ENCODE measurements at regions of chr12 and their contacts with region 1.

Region 1: DNA sequence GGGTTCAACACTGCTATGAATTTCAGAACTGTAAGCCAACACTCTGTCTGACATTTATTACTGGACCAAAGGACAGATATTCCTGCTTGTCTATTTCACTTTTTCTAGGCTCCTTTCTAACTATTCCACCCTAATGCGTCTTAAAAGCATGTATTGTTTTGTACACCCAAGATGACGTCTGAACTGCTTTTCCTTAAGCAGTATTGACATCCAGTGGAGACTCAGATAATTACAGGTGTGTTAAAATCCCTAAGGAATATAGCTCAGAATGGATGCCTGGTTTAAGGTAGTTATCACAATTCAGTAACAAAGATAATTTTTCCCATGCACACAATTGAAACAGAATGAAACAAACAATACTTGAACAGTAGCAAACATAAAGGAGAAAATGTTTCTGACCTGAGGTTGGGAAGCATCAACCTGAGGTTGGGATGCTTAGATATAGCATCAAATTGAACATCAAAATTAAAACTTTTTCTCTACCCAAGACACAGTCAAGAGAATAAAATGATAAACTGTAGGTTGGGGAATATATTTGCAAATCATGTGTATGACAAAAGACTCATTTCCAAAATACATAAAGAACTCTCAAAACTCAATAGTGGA is 93.7 kb upstream of the PTPRR start:
- DNase-seq: no peak
- H3K4me3 ChIP-seq: no peak overlapping the region
- H3K27ac ChIP-seq: no peak overlapping the region
- H3K4me1 ChIP-seq: peaks cover 0 to 15% (median 1%) of the 10 kb centered on the region in 4 donors
- H3K27me3 ChIP-seq: no peaks in the 10 kb centered on the region
- CTCF ChIP-seq: peak; percentile 63 to 86

Region 2: DNA sequence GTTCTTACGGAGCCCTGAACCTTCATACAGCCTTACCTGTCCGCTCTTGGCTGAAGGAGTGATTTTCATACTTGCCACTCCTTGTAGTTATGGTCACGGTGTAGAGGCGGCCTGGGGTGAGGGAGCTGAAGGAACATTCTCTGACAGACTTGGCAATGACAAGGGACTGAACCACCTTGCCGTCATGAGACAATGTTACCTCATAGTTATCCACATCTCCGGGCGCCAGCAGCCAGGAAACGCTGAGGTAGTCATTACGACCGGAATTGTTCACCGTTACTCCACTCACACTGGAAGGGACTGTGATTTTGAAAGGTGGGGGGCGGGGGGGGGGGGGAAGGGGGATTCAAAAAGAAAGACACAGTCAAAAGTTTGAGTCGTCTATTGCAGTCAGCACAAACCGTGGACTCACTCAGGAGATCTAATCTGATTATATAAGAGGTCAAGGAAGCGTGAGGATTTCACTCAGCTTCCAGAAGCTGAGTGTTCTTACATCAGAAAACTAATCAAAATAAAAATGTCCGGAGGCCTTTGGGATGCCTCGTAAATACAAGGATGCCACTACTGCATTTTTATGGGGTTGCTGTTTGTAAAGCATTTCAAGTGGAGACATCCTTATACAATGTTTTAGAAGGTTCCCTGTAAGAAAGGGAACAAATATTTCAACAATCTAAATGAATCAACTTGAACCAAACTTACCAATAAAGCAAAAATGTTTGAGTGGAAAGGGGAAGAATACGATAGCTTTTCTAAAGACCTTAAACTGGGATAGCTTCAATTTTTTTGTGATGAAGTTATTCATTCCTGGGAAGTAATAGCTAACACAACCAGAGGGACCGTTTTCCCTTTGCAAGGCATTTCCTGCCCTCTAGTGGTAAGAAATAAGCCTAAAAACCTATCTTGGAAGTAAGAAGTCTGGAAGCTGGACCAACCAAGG is 437.7 kb before region 1 on chr12:
- intact Hi-C with region 1: loop called (anchors 10 kb)
- DNase-seq: no peak
- H3K4me3 ChIP-seq: no peak overlapping the region
- H3K27ac ChIP-seq: no peak overlapping the region
- H3K4me1 ChIP-seq: no peaks in the 10 kb centered on the region
- H3K27me3 ChIP-seq: no peaks in the 10 kb centered on the region
- CTCF ChIP-seq: peak; percentile 75 to 85

Region 3: GRCh38 chr12:70733385-70733784 is 280.9 kb before region 1 on chr12:
- intact Hi-C with region 1: loop called (anchors 2 kb)
- DNase-seq: no peak
- H3K4me3 ChIP-seq: no peak overlapping the region
- H3K27ac ChIP-seq: no peak overlapping the region
- H3K4me1 ChIP-seq: no peaks in the 10 kb centered on the region
- H3K27me3 ChIP-seq: no peaks in the 10 kb centered on the region
- CTCF ChIP-seq: peak; percentile 51 to 62

Region 4: DNA sequence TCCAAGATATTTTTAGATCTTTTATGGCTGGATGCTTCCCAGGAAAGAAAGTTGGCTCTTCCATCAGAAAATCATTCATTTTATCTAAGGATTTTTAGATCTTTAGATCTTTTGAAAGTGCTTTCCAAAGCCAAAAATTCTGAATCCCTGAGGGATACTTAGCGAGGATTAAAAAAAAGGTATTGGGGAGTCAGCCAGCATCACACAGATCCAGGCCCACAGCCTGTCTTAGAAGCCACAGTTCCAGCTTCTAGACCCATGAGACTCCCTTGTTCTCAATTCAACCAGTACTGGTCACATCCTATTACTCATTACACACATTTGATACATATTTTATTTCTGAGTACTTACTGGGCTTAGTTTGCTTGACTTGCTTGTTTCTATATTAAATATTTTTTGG is 93.7 kb after region 1 on chr12:
- intact Hi-C with region 1: no loop called
- DNase-seq: no peak
- H3K4me3 ChIP-seq: no peak overlapping the region
- H3K27ac ChIP-seq: peak overlapping the region in 1 of 2 donors; percentile 15
- H3K4me1 ChIP-seq: peaks cover 0 to 13% (median 0%) of the 10 kb centered on the region in 4 donors
- H3K27me3 ChIP-seq: no peaks in the 10 kb centered on the region
- CTCF ChIP-seq: no peak

Measured in tibial artery (tissue), 4 donors.